AG04449 (cell line): ENCODE measurements at regions of chr4 and their contacts with region 1.

Region 1: DNA sequence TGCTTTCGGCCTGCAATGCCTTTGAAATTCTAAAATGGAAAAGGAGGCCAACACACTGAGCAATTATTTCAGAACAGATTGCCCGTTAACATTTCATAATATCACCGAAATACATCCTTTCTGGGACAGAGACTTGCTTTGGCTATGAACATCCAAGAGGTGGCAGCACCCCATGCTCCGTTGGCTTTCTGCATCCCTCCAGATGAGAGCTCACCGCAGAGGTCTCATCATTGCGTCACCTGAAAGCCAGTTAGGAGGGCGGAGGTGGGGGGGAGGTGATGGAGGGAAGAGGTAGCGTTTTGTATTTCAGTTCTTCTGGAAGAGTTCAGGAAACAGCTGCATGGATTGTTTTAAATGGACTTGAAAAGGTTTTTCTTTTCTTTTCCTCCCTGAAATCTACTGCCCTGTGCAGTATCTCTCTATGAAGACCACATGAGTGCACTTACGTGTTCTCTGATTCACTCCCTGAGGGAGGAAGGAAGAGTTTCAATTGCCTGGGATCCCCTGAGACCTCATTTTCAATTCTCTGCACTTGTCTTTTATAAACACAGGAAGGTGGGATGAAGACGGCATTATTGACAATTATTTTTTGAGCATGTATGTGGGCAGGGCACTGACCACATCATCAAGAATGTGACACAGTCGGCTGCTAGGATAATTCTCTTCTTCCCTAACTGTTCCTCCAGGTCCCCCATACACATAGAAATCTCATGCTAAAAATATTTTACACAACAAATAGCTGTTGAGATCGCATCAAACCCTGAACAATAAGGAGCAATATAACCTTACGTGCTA is 166.9 kb upstream of the PGRMC2 start:
- DNase-seq: peak; percentile 69
- H3K4me3 ChIP-seq: peak overlapping the region; percentile 21; the same call in 1 of the 2 replicates
- CTCF ChIP-seq: peak; percentile 83

Region 2: DNA sequence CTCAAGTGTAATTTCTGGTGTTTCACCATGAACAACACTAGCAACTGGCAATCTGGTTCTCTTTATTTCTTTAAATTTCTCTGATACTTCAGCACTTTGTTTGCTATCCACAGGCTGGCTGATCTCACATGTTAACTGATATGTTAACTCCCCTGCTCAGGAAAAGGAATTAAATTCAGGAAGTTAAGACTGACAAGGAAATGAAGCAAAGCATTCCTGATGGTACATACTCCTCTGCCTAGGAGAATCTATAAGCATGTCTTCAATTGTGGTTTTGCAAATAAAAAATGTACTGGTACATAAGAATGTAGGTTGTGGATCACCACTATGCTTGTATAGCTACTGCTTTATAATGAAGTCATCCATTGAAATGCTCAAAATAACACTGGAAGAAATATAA is 1940.9 kb before region 1 on chr4:
- CTCF ChIA-PET with region 1: no interaction called
- POLR2A ChIA-PET with region 1: no interaction called
- DNase-seq: no peak
- H3K4me3 ChIP-seq: no peak overlapping the region
- CTCF ChIP-seq: no peak

Region 3: GRCh38 chr4:128177498-128177897 is 277.0 kb before region 1 on chr4:
- CTCF ChIA-PET with region 1: no interaction called
- POLR2A ChIA-PET with region 1: no interaction called
- DNase-seq: no peak
- H3K4me3 ChIP-seq: no peak overlapping the region
- CTCF ChIP-seq: no peak

Region 4: GRCh38 chr4:128307123-128307571 is 147.3 kb before region 1 on chr4:
- CTCF ChIA-PET with region 1: no interaction called
- POLR2A ChIA-PET with region 1: no interaction called
- DNase-seq: no peak
- H3K4me3 ChIP-seq: no peak overlapping the region
- CTCF ChIP-seq: no peak

Region 5: GRCh38 chr4:128470492-128471053 is 16.1 kb after region 1 on chr4:
- CTCF ChIA-PET with region 1: interaction called, 75 read pairs
- POLR2A ChIA-PET with region 1: interaction called, 3 read pairs
- DNase-seq: no peak
- H3K4me3 ChIP-seq: no peak overlapping the region
- CTCF ChIP-seq: no peak

Region 6: DNA sequence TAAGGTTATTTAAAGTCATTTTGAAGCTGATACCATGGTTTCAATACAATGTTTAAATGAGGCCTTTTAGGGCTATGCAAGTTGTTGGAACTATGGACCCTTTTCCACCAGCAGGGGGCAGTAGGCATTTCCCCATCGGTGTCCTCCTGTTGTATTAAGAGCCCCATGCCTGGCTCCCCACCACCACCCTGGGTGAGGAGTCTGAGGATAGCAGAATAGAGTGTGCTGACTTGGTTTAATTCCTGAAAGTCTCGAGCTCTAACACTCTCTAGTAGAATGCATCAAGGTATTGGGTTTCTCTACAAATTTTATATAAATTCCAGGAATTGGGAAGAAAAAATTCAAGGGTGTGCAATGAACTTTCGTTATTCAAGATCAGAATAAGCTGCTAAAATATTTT is 120.2 kb after region 1 on chr4:
- CTCF ChIA-PET with region 1: interaction called, 14 read pairs
- POLR2A ChIA-PET with region 1: no interaction called
- DNase-seq: peak; percentile 34
- H3K4me3 ChIP-seq: no peak overlapping the region
- CTCF ChIP-seq: peak; percentile 42

Region 7: DNA sequence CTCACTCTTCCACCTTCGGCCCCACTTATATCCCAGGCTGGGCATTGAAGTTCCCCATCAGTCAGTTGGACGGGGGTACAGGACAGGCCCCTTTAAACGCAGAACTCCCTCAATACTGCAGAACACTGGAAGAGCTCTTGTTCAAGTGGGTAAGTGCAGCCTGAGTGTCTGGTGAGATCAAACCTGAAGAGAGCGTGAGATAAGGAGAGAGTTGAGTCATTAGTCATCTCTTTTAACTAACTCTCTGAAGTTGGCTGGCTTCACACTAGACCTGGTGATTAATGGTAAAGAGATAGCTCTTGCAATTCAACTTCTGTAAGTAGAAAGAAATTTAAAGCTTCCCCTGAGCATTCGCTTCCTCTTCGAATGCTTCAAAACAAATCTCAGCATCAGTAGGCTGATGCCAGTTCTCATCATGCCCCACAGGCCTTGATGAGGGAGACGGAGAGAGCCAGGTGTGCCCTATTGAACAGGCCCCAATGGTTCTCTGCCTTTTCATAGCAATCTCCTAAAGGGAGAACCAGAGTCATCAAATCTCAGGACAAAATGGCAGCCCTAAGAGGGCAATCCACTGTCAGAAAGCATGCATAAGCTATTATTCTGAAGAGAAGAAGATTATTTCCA is 314.0 kb after region 1 on chr4:
- CTCF ChIA-PET with region 1: no interaction called
- POLR2A ChIA-PET with region 1: no interaction called
- DNase-seq: peak; percentile 16
- H3K4me3 ChIP-seq: no peak overlapping the region
- CTCF ChIP-seq: no peak

Region 8: GRCh38 chr4:128809477-128810330 is 355.2 kb after region 1 on chr4 and contains the start of gene JADE1:
- CTCF ChIA-PET with region 1: interaction called, 19 read pairs
- POLR2A ChIA-PET with region 1: interaction called, 4 read pairs
- DNase-seq: peak; percentile 77
- H3K4me3 ChIP-seq: peak within 1 kb of the TSS; percentile 77
- CTCF ChIP-seq: peak; percentile 81

Region 9: DNA sequence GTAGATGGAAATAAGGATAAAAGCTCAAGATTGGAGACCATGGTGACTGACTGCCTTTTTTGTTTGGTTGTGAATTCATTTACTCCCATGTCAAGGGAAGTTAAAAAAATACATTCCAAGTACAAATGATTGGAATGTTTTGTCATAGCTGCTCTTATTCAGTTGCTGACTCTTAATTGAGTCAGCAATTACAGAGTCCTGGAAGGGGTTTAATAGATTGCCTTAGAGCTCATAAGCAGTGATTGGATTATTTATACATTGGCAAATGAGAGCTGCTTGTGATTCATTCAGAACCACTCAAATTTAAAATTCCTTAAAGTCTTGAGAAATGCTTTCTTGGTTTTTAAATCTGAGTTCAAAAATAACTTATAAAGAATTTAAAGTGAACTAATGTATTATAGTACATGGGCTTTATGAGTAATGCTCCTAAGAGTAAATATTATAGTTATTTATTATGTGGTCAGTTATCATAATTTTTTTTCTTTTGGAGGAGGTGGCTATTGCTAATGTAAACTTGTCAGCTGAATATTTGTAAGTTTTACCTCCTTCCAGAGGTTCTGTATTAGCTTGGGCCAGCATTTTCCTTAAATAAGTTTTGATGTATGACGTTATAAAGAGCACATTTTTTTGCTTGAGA is 368.7 kb after region 1 on chr4:
- CTCF ChIA-PET with region 1: interaction called, 10 read pairs
- POLR2A ChIA-PET with region 1: no interaction called
- DNase-seq: peak; percentile 95
- H3K4me3 ChIP-seq: no peak overlapping the region
- CTCF ChIP-seq: no peak